ENCODE measurements at regions of chr1 and their contacts with region 1.

Region 1: GRCh38 chr1:48093696-48094528 is 96.7 kb upstream of the TRABD2B start:
- DNase-seq: peak; percentile 38
- ATAC-seq: peak; percentile 99
- H3K4me3 ChIP-seq: peak overlapping the region; percentile 12 to 33; a peak in 3 of 4 replicates
- H3K27ac ChIP-seq: no peak overlapping the region
- H3K4me1 ChIP-seq: no peaks in the 10 kb centered on the region
- H3K27me3 ChIP-seq: peaks cover 13% of the 10 kb centered on the region
- CTCF ChIP-seq: peak; percentile 88

Region 2: DNA sequence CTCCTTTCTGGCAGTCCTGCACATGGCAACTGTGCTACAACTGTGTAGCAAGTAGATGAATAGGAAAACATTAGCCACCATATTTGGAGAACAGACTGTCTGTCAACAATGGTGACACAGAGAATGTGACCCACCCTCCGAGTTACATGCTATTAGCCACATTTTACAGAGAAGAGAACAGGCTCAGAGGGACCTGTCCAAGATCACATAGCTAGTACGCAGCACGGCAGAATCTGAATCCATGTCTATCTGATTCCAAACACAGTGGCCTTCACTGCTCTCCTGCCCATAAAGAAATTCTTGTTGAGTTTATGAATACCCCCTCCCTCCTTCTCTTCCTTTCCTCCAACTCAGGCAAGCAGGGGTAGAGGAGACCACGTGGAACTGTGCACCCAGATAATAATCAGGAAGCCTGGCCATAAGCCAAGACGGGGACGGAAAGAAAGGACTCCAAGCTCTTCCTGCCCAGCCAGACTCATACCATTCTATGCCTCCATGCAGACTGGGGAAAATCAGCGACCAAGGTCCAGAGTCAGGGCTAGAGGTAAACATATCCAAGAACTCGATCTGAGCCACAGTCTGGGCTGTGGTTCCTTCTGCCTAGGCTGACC is 175.6 kb before region 1 on chr1:
- CTCF ChIA-PET with region 1: no interaction called
- POLR2A ChIA-PET with region 1: no interaction called
- in situ Hi-C with region 1: no loop called
- intact Hi-C with region 1: no loop called
- DNase-seq: no peak
- ATAC-seq: no peak
- H3K4me3 ChIP-seq: no peak overlapping the region
- H3K27ac ChIP-seq: no peak overlapping the region
- H3K4me1 ChIP-seq: no peaks in the 10 kb centered on the region
- H3K27me3 ChIP-seq: no peaks in the 10 kb centered on the region; the same call in 1 of the 2 replicates
- CTCF ChIP-seq: no peak

Region 3: DNA sequence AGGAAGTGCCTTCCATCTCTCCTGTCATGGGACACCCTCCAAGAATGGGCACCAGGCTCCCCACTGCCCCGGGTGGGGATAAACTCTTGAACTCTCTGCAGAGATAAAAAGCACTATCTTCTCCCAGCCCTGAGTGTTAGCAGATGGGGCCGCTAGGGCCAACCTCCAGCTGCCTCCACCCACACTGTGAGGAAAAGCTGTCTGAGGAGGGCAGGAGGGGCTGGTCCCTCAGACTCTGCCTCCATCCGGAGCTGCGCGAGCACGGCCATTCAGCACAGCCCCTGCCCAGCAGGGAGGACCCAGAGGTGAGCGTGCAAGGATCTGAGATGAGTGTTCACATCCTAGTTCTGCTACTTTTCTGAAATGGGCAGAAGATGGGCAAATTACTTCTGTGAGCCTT is 44.9 kb before region 1 on chr1:
- CTCF ChIA-PET with region 1: interaction called, 12 read pairs
- POLR2A ChIA-PET with region 1: no interaction called
- in situ Hi-C with region 1: no loop called
- intact Hi-C with region 1: no loop called
- DNase-seq: no peak
- ATAC-seq: no peak
- H3K4me3 ChIP-seq: no peak overlapping the region
- H3K27ac ChIP-seq: no peak overlapping the region
- H3K4me1 ChIP-seq: no peaks in the 10 kb centered on the region
- H3K27me3 ChIP-seq: no peaks in the 10 kb centered on the region
- CTCF ChIP-seq: no peak

Measured in Panc1 (cell line).